GM13977 (cell line): ENCODE measurements at regions of chr6 and their contacts with region 1.

Region 1: DNA sequence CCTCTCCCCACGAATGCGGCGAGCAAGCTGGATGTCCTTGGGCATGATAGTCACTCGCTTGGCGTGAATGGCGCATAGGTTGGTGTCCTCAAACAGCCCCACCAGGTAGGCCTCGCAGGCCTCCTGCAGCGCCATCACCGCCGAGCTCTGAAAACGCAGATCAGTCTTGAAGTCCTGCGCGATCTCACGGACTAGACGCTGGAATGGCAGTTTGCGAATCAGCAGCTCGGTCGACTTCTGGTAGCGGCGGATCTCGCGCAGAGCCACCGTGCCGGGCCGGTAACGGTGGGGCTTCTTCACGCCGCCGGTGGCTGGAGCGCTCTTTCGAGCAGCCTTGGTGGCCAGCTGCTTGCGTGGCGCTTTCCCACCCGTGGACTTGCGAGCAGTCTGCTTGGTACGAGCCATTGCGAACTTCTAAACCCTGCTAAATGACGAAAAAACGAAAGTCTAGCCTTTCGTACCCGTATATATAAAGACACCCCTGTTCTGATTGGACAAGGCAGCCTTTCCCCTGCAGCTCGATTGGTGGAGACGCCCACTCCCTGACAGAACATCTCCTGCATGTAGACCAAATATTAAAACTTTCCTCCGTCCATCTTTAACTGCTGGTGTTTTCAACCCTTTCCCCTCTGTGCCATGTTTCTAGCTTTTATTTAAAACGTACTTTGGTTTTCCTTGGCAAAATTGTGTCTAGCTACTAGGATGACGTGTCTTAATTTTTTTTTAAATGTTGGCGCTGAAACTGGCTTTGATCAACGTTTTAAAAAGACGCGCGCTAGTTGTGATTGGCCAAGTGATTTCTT is 109.8 kb downstream of the HFE start:
- DNase-seq: peak; percentile 87
- CTCF ChIP-seq: no peak

Region 2: DNA sequence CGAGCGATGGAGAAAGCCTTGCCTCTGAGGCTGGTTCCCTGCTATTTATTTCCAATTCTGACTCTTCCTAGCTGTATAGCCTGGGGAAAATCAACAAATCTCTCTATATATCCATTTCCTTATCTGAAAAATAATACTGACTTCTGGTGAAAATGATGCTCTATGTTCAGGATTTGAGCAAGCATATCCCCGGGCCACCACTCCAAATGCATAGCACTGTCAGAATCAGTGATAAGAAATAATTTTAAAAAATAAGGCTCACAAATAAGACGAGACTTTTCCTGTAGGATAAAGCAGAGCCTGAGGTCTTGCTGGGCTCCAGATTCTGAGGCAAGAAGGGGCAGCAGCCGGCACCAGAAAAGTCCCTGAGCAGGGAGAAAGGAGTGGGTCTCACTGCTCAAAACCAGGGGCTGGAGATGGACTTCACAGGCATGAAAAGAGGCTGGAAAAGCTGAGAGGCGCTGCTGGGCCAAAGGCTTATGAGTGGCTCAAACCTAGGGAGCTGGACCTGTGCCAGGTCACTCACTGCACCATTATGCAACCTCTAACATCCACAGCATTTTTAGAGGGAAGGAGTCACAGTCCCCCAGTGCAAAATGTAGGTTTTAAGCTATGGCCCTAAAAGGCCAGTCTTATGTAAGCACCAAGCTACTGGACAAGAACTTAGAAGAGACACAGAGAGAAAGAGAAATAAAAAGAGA is 490.6 kb before region 1 on chr6:
- in situ Hi-C with region 1: no loop called
- DNase-seq: no peak
- CTCF ChIP-seq: no peak

Region 3: GRCh38 chr6:26122793-26123674 is 74.0 kb before region 1 on chr6:
- in situ Hi-C with region 1: loop called (anchors 5 kb)
- DNase-seq: peak; percentile 82
- CTCF ChIP-seq: no peak

Region 4: GRCh38 chr6:27132532-27133280 is 935.7 kb after region 1 on chr6:
- in situ Hi-C with region 1: loop called (anchors 10 kb)
- DNase-seq: peak; percentile 93
- CTCF ChIP-seq: no peak